Uterus (tissue), 4 donors: ENCODE measurements at regions of chr9 and their contacts with region 1.

Region 1: DNA sequence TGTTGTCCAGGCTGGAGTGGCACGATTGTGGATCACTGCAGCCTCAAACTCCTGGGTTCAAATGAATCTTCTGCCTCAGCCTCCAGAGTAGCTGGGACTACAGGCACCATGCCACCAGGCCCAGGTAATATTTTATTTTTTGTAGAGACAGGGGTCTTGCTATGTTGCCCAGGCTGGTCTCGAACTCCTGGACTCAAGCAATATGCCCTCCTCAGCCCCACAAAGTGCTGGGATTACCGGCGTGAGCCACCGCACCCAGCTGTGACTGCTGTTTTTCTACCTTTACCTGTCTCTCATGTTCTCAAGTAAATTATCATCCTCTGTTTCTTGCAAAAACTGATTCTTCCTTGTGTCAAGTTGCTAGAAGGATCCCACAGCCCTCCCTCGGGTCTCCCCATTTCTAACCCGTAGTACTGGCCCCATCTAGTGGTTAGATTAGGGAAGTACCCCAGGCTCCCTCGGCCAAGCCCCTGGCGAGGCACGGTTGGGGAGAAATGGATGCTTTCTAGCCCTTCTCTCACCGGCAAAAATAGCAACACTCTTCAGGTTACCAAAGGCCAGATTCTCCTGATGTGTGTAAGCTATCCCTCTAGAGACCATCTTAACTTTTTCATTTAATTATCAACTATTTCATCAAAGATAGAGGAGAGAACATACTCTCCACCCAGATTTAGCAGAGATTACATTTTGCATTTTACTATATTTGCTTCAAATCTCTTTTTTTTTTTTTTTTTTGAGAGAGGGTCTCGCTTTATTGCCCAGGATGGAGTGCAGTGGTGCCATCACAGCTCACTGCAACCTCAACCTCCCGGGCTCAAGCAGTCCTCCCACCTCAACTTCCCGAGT is 19.2 kb upstream of the TOR1B start:
- DNase-seq: peak; percentile 70 to 77
- H3K4me3 ChIP-seq: no peak overlapping the region
- H3K27ac ChIP-seq: no peak overlapping the region
- H3K4me1 ChIP-seq: no peaks in the 10 kb centered on the region
- H3K27me3 ChIP-seq: no peaks in the 10 kb centered on the region
- CTCF ChIP-seq: peak; percentile 91 to 97 (median 94)
- POLR2A ChIP-seq: no peak

Region 2: DNA sequence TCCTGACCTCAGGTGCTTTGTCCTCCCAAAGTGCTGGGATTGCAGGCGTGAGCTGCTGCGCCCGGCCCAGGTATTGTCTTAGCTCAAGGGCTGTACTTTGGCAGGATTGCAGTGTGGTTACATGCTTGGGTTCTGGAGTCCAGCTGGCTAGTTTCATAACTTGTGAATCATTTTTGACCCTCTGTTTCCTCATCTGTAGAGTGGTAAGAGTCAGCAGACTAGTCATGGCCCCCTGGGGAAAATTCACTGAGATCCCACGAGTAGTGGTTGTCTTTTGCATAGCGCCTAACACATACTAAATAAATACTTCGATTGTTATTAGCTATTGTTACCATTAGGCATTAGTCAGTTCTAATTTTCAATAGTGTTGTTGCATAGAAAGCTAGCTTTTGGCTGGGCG is 658.3 kb before region 1 on chr9:
- intact Hi-C with region 1: loop called (anchors 10 kb)
- DNase-seq: no peak
- H3K4me3 ChIP-seq: no peak overlapping the region
- H3K27ac ChIP-seq: no peak overlapping the region
- H3K4me1 ChIP-seq: no peaks in the 10 kb centered on the region
- H3K27me3 ChIP-seq: no peaks in the 10 kb centered on the region
- CTCF ChIP-seq: no peak
- POLR2A ChIP-seq: no peak

Region 3: GRCh38 chr9:129641746-129642513 is 141.8 kb before region 1 on chr9 and contains the start of gene ASB6:
- intact Hi-C with region 1: loop called (anchors 10 kb)
- DNase-seq: peak; percentile 97 to 99
- H3K4me3 ChIP-seq: peak within 1 kb of the TSS; percentile 71 to 91
- H3K27ac ChIP-seq: peak within 1 kb of the TSS; percentile 84 to 87
- H3K4me1 ChIP-seq: peaks cover 0 to 14% of the 10 kb centered on the region in 2 donors
- H3K27me3 ChIP-seq: no peaks in the 10 kb centered on the region
- CTCF ChIP-seq: peak; percentile 98 to 100 (median 100)
- POLR2A ChIP-seq: peak; percentile 43 to 75
- total RNA-seq, gene ASB6: 1.3 to 20.3 (median 8.5) TPM

Region 4: DNA sequence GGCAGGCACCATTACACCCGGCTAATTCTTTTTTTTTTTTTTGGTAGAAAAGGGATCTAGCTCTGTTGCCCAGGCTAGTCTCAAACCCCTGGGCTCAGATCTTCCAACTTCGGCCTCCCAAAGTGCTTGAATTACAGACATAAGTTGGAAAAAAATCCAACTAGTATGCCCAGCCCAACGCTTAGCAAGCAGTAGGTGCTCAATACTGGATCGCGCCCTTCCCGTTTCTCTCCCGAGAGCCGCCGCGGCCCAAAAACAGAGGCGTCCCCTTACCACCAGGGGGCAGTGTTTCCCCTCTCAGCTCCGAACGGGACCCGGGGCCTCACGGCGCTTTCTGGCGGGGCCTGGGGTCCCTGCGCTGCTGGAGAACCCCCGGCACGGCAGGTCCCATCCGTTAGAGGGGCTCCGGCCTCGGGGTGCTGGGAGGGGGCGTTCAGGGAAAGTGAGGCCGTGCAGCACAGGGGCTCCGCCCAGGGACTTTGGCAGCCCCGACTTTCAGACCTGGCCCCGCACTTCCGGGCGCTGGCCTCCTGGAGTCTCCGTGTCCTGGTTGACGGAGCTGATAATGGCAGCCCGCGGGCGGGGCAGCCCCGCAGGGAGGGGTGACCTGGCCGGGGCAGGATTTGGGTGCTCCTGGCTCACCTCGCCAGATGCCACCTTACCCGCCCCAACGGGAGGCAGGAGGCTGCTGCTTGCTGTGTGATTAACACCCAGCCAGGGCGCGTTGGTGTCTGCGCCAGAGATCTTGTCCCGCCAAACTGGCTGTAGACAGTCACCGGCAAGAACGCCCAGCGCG is 46.1 kb before region 1 on chr9:
- intact Hi-C with region 1: loop called (anchors 5 kb)
- DNase-seq: peak; percentile 85 to 88
- H3K4me3 ChIP-seq: peak overlapping the region; percentile 36 to 47
- H3K27ac ChIP-seq: peak overlapping the region; percentile 54 to 67
- H3K4me1 ChIP-seq: no peaks in the 10 kb centered on the region
- H3K27me3 ChIP-seq: no peaks in the 10 kb centered on the region
- CTCF ChIP-seq: peak; percentile 93 to 98 (median 96)
- POLR2A ChIP-seq: peak in 1 of 2 donors; percentile 22

Region 5: DNA sequence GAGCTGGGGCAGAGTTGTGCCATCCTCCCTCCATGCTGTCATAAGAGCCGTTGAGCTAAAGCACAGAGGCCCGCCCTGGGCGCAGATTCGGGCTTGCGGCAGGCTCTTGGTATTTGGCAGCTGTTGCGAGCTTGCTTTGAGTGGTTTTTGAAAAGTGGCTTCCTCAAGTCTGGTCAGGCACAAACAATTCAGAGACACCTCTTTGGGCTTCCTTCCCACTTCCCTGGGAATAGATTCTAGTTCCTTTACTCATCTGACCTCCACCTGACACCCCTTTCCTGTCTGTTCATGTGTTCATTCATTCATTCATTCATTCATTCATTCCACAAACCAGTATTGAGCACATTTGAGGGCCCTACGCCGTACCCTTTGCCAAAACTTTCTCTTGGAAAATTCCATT is 415.9 kb after region 1 on chr9:
- intact Hi-C with region 1: no loop called
- DNase-seq: no peak
- H3K4me3 ChIP-seq: no peak overlapping the region
- H3K27ac ChIP-seq: peak overlapping the region; percentile 72 to 80
- H3K4me1 ChIP-seq: peaks cover 0 to 22% of the 10 kb centered on the region in 2 donors
- H3K27me3 ChIP-seq: no peaks in the 10 kb centered on the region
- CTCF ChIP-seq: no peak
- POLR2A ChIP-seq: no peak